HEK293 (cell line): ENCODE measurements at regions of chr6 and their contacts with region 1.

Region 1: GRCh38 chr6:110873981-110874879 is at the start of gene AMD1:
- H3K4me3 ChIP-seq: peak within 1 kb of the TSS; percentile 92
- H3K27ac ChIP-seq: peak within 1 kb of the TSS; percentile 96
- H3K4me1 ChIP-seq: peaks cover 7% of the 10 kb centered on the region
- CTCF ChIP-seq: peak; percentile 37; the same call in 1 of the 2 replicates

Region 2: DNA sequence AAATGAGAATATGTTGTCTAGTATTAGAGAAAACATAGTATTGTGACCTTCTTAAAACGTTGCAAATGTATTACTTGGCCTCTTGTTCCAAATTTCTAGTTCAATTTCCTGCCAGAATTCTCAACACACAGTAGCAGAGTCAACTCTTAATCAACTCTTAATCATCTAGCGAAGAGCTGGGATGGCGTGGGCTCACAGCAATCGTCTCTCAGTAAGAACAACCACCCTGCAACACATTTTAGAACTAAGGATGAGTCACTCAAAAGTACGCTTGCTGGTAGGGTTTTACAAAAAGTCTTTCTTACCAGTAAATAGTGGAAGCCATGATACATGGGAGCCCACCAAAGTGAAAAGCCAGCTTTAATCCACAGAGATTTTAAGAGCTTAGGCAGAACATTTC is 871.6 kb before region 1 on chr6:
- CTCF ChIA-PET with region 1: no interaction called
- POLR2A ChIA-PET with region 1: no interaction called
- H3K4me3 ChIP-seq: no peak overlapping the region
- H3K27ac ChIP-seq: no peak overlapping the region
- H3K4me1 ChIP-seq: no peaks in the 10 kb centered on the region
- CTCF ChIP-seq: no peak

Region 3: GRCh38 chr6:110528101-110528929 is 345.9 kb before region 1 on chr6:
- CTCF ChIA-PET with region 1: interaction called, 11 read pairs
- POLR2A ChIA-PET with region 1: no interaction called
- H3K4me3 ChIP-seq: no peak overlapping the region
- H3K27ac ChIP-seq: no peak overlapping the region
- H3K4me1 ChIP-seq: peaks cover 8% of the 10 kb centered on the region
- CTCF ChIP-seq: peak; percentile 60; the same call in 1 of the 2 replicates

Region 4: GRCh38 chr6:110781522-110782214 is 92.6 kb before region 1 on chr6:
- CTCF ChIA-PET with region 1: interaction called, 4 read pairs
- POLR2A ChIA-PET with region 1: interaction called, 11 read pairs
- H3K4me3 ChIP-seq: no peak overlapping the region
- H3K27ac ChIP-seq: no peak overlapping the region
- H3K4me1 ChIP-seq: peaks cover 5% of the 10 kb centered on the region; the same call in 1 of the 2 replicates
- CTCF ChIP-seq: no peak

Region 5: GRCh38 chr6:110815217-110816109 is 58.8 kb before region 1 on chr6 and contains the start of gene CDK19:
- CTCF ChIA-PET with region 1: interaction called, 13 read pairs
- POLR2A ChIA-PET with region 1: interaction called, 339 read pairs
- H3K4me3 ChIP-seq: peak within 1 kb of the TSS; percentile 95
- H3K27ac ChIP-seq: peak within 1 kb of the TSS; percentile 79
- H3K4me1 ChIP-seq: peaks cover 10% of the 10 kb centered on the region; the same call in 1 of the 2 replicates
- CTCF ChIP-seq: no peak

Region 6: DNA sequence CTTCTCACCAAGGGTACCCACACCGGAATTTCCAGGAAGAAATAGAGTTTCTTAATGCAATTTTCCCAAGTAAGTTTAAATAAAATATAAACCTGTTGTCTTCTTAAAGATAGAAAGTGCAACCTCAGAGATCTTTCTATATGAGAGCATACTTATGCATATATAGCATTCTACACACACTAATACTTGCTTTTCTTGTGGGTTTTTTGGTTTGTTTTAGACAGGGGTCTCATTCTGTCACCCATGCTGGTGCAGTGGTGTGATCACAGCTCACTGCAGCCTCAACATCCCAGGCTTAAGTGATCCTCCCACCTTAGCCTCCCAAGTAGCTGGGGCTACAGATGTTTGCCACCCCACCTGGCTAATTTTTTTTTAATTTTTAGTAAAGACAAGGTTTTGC is 16.1 kb after region 1 on chr6:
- CTCF ChIA-PET with region 1: interaction called, 15 read pairs
- POLR2A ChIA-PET with region 1: interaction called, 43 read pairs
- H3K4me3 ChIP-seq: no peak overlapping the region
- H3K27ac ChIP-seq: no peak overlapping the region
- H3K4me1 ChIP-seq: no peaks in the 10 kb centered on the region
- CTCF ChIP-seq: no peak

Region 7: GRCh38 chr6:110944681-110945151 is 70.5 kb after region 1 on chr6:
- CTCF ChIA-PET with region 1: interaction called, 6 read pairs
- POLR2A ChIA-PET with region 1: interaction called, 10 read pairs
- H3K4me3 ChIP-seq: no peak overlapping the region
- H3K27ac ChIP-seq: no peak overlapping the region
- H3K4me1 ChIP-seq: no peaks in the 10 kb centered on the region
- CTCF ChIP-seq: no peak

Region 8: GRCh38 chr6:110981202-110981600 is 107.0 kb after region 1 on chr6:
- CTCF ChIA-PET with region 1: no interaction called
- POLR2A ChIA-PET with region 1: interaction called, 22 read pairs
- H3K4me3 ChIP-seq: peak overlapping the region; percentile 97
- H3K27ac ChIP-seq: no peak overlapping the region; the same call in 1 of the 2 replicates
- H3K4me1 ChIP-seq: 0 out of 2 replicates have a peak, but pooled peaks cover 4% of the 10 kb centered on the region
- CTCF ChIP-seq: no peak